Mammary epithelial cell (primary cell): ENCODE measurements at regions of chr16 and their contacts with region 1.

Region 1: GRCh38 chr16:70534971-70535370 is 11.4 kb downstream of the SF3B3 start:
- DNase-seq: no peak
- H3K4me3 ChIP-seq: no peak overlapping the region
- H3K27ac ChIP-seq: no peak overlapping the region
- H3K4me1 ChIP-seq: no peaks in the 10 kb centered on the region
- H3K27me3 ChIP-seq: no peaks in the 10 kb centered on the region
- CTCF ChIP-seq: no peak

Region 2: GRCh38 chr16:70267516-70267915 is 267.5 kb before region 1 on chr16:
- CTCF ChIA-PET with region 1: no interaction called
- dilution Hi-C with region 1: no loop called
- in situ Hi-C with region 1: loop called in 1 of 2 experiments (anchors 10 kb)
- intact Hi-C with region 1: loop called (anchors 10 kb)
- DNase-seq: peak; percentile 21
- H3K4me3 ChIP-seq: no peak overlapping the region
- H3K27ac ChIP-seq: no peak overlapping the region
- H3K4me1 ChIP-seq: peaks cover 5% of the 10 kb centered on the region
- H3K27me3 ChIP-seq: no peaks in the 10 kb centered on the region
- CTCF ChIP-seq: peak; percentile 56 to 59

Region 3: DNA sequence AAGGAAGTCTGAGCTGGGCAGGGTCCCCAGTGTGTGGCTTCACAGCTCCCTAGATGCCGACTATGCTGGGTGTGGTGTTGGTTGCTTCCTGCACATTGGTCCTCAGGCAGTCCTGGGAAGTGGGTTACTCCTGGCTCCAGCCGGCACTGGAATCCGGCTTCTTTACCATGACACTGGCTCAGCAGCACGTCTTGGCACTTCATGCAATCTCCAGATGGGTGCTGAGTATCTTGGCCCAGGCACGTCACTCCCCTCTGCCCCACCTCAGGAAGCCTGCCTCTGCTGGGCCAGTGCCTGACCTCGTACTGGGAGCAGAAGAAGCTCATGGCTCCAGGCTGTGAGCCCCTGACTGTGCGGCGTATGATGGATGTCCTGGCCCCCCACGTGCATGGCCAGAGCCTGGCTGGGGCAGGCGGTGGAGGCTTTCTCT is 56.0 kb before region 1 on chr16:
- CTCF ChIA-PET with region 1: no interaction called
- dilution Hi-C with region 1: loop called (anchors 5 kb)
- in situ Hi-C with region 1: no loop called
- intact Hi-C with region 1: no loop called
- DNase-seq: no peak
- H3K4me3 ChIP-seq: no peak overlapping the region
- H3K27ac ChIP-seq: no peak overlapping the region
- H3K4me1 ChIP-seq: peaks cover 40% of the 10 kb centered on the region
- H3K27me3 ChIP-seq: no peaks in the 10 kb centered on the region
- CTCF ChIP-seq: no peak

Region 4: DNA sequence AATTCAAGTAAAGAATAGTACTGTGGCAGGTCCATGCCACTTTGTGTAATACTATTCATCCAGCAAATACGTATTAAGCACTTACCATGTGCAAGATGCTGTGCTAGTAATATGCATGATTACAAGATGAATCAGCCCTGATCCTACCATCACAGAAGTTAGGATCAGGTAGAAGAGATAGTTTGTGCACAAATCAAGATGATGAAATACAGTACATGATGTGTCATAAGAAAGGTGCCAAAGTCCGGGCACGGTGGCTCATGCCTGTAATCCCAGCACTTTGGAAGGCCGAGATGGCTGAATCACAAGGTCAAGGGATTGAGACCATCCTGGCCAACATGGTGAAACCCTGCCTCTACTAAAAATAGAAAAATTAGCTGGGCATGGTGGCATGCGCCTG is 22.5 kb before region 1 on chr16:
- CTCF ChIA-PET with region 1: no interaction called
- dilution Hi-C with region 1: no loop called
- in situ Hi-C with region 1: no loop called
- intact Hi-C with region 1: no loop called
- DNase-seq: peak; percentile 91
- H3K4me3 ChIP-seq: no peak overlapping the region
- H3K27ac ChIP-seq: no peak overlapping the region
- H3K4me1 ChIP-seq: peaks cover 4% of the 10 kb centered on the region
- H3K27me3 ChIP-seq: no peaks in the 10 kb centered on the region
- CTCF ChIP-seq: no peak

Region 5: GRCh38 chr16:70568601-70569237 is 33.7 kb after region 1 on chr16:
- CTCF ChIA-PET with region 1: no interaction called
- dilution Hi-C with region 1: loop called (anchors 5 kb)
- in situ Hi-C with region 1: no loop called
- intact Hi-C with region 1: no loop called
- DNase-seq: peak; percentile 87
- H3K4me3 ChIP-seq: no peak overlapping the region
- H3K27ac ChIP-seq: no peak overlapping the region
- H3K4me1 ChIP-seq: peaks cover 39% of the 10 kb centered on the region
- H3K27me3 ChIP-seq: no peaks in the 10 kb centered on the region
- CTCF ChIP-seq: no peak